ENCODE measurements at regions of chr1 and their contacts with region 1.

Region 1: DNA sequence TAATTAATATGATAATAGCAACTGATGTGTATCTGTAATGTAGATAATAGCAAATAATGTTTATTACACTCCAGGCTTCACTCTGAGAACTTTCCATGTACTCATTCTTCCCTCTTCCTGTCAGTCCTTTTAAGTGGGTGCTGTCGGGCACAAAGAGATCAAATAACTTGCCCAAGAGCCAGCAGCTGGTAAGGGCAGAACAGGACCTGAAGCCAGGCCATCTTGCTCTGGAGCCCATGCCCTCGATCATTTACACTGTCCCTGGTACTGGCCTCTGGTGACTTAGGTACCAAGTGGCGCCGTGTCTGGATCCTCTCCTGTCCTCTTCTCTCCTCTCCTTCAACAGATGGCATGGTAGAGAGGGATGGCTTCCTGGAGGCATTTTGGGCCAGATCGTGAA is 97.2 kb downstream of the VPS13D start:
- DNase-seq: no peak
- ATAC-seq: peak in 5 of 8 donors; percentile 39 to 86 (median 80)
- H3K4me3 ChIP-seq: no peak overlapping the region
- H3K27ac ChIP-seq: no peak overlapping the region
- H3K4me1 ChIP-seq: peaks cover 0 to 7% (median 0%) of the 10 kb centered on the region in 9 donors
- H3K27me3 ChIP-seq: no peaks in the 10 kb centered on the region
- CTCF ChIP-seq: no peak

Region 2: DNA sequence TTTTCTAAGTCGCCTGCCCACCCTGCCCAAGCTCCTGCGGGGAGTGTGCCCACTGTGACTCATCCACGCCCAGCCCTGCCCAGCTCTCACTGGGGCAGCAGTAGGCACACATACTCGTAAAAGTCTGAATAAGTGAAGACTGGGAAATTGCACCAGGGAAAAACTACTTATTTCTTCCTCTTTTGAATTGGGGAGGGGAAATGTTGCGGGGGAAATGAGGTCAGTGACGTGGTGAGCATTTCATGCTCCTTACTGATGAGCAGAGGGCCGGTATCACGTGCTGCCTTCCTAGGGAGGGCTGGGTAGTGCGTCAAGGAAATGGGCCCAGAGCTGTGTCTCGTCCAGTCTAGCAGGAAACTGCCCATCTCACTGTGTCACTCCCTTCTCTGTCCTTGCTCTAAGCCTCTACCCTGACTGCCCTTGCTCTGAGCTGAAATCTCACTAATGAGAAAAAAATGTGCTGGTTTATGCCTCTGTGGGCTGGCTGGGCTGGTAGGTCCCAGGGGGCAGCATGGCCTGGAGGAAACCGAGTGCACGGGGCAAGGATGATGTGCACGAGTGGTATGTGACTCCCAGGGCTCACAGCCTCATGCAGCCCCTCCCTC is 173.7 kb before region 1 on chr1:
- intact Hi-C with region 1: no loop called
- DNase-seq: peak in 1 of 2 donors; percentile 63
- ATAC-seq: peak; percentile 73 to 89 (median 85)
- H3K4me3 ChIP-seq: no peak overlapping the region
- H3K27ac ChIP-seq: peak overlapping the region in 8 of 10 donors; percentile 38 to 92 (median 62)
- H3K4me1 ChIP-seq: peaks cover 5 to 80% (median 38%) of the 10 kb centered on the region in 9 donors
- H3K27me3 ChIP-seq: no peaks in the 10 kb centered on the region
- CTCF ChIP-seq: no peak

Region 3: DNA sequence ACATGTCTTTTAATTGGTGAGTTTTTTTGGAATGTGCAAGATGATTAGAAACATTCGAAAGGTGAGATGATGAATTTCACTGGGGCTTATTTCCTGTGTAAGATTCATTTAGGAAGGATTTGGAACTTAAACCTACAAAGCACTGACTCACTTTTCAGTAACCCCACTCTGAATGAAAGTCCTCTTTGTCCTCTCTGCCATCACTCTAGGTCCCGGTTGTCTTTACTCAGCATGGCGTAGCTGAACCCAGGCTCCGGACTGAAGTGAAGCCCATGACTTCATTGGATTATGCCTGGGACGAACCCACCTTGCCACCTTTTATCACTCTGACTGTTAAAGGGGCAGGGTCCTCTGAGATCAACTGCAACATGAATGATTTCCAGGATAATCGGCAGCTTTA is 42.3 kb after region 1 on chr1:
- intact Hi-C with region 1: no loop called
- DNase-seq: no peak
- ATAC-seq: no peak
- H3K4me3 ChIP-seq: no peak overlapping the region
- H3K27ac ChIP-seq: no peak overlapping the region
- H3K4me1 ChIP-seq: peaks cover 0 to 5% (median 0%) of the 10 kb centered on the region in 9 donors
- H3K27me3 ChIP-seq: no peaks in the 10 kb centered on the region
- CTCF ChIP-seq: no peak

Region 4: GRCh38 chr1:12386130-12386529 is 59.1 kb after region 1 on chr1:
- intact Hi-C with region 1: loop called in 1 of 10 experiments (anchors 10 kb)
- DNase-seq: no peak
- ATAC-seq: no peak
- H3K4me3 ChIP-seq: no peak overlapping the region
- H3K27ac ChIP-seq: peak overlapping the region in 1 of 10 donors; percentile 28
- H3K4me1 ChIP-seq: peaks cover 0 to 10% (median 4%) of the 10 kb centered on the region in 9 donors
- H3K27me3 ChIP-seq: no peaks in the 10 kb centered on the region
- CTCF ChIP-seq: no peak